Esophagus muscularis mucosa (tissue), 4 donors: ENCODE measurements at regions of chr11 and their contacts with region 1.

Region 1: GRCh38 chr11:34997952-34998528 is 81.6 kb downstream of the PDHX start:
- DNase-seq: no peak
- H3K4me3 ChIP-seq: no peak overlapping the region
- H3K27ac ChIP-seq: no peak overlapping the region
- H3K4me1 ChIP-seq: peaks cover 0 to 10% (median 4%) of the 10 kb centered on the region in 4 donors
- H3K27me3 ChIP-seq: no peaks in the 10 kb centered on the region
- CTCF ChIP-seq: peak; percentile 46 to 59 (median 54)
- EP300 ChIP-seq: no peak
- POLR2A ChIP-seq: no peak

Region 2: GRCh38 chr11:35144136-35144741 is 146.2 kb after region 1 on chr11:
- intact Hi-C with region 1: loop called (anchors 10 kb)
- DNase-seq: no peak
- H3K4me3 ChIP-seq: peak overlapping the region in 3 of 4 donors; percentile 1 to 88 (median 12)
- H3K27ac ChIP-seq: peak overlapping the region; percentile 41 to 94 (median 76)
- H3K4me1 ChIP-seq: peaks cover 25 to 93% (median 77%) of the 10 kb centered on the region in 4 donors
- H3K27me3 ChIP-seq: no peaks in the 10 kb centered on the region
- CTCF ChIP-seq: no peak
- EP300 ChIP-seq: no peak
- POLR2A ChIP-seq: no peak

Region 3: DNA sequence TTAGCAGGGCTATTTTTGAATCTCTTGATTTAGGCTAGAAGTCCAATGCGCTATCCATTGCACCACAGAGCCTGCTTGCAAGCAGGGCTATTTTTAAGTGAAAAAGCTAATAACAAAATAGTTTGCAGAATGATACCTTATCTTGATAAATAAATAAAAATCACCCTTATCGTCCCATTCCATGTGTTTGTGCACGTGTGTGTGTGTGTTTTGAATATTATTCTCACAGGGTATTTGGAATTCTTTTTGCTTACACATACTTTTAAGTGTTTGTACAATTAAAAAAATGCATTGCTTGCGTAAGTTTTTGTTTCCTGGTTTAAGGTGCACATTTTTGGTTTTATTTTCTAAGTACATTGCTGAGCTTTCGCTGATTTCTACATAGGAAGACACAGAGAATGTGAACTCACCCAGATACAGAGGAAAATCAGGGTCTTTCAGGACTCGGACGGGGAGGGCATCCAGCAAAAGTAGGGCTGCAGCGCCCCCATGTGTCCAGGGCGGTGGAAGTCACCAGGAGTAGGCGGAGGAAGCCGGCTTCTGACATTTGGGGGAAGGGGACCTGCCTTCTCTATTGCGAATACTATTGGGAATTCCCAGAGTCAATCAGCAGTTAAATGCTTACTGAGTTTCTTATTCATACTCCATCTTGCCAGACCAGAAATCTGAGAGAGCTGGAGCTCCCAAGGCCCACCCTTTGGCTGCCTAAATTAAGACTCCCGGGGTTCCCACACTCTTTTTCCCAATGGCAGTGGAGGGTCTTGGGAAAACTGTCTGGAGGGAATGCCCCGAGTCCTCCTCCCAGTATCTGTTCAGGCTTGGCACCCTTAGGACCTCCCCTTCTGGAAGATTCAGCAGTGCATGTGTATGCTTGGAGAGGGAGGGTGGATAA is 394.1 kb after region 1 on chr11:
- intact Hi-C with region 1: loop called (anchors 2 kb)
- DNase-seq: peak; percentile 94
- H3K4me3 ChIP-seq: peak overlapping the region in 3 of 4 donors; percentile 17 to 36 (median 18)
- H3K27ac ChIP-seq: no peak overlapping the region
- H3K4me1 ChIP-seq: peaks cover 8 to 21% (median 17%) of the 10 kb centered on the region in 4 donors
- H3K27me3 ChIP-seq: no peaks in the 10 kb centered on the region
- CTCF ChIP-seq: peak; percentile 83 to 87 (median 85)
- EP300 ChIP-seq: no peak
- POLR2A ChIP-seq: no peak